T-cell (primary cell): ENCODE measurements at regions of chr14 and their contacts with region 1.

Region 1: DNA sequence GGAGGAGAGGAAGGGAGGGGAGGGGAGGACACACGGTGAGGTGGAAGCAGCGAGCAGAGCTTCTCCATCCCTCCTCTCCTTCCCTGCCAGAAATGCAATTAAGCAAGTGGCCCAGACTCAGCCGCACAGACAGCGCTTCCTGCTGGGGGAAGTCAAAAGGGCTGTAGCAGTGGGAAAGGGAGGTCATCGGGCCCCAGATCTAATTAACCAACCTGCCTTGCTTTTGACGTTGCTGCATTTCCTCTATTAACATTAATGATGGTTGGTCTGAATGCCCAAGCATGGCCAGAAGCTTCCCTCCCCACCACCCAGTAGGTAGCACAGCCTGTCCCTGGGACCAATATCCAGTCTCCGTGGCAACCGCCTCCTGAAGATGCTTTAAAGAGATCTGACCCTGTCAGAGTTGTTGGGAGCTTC is 4.6 kb upstream of the NGB start:
- DNase-seq: no peak
- ATAC-seq: no peak
- H3K4me3 ChIP-seq: no peak overlapping the region
- H3K4me3 Mint-ChIP-seq: no peak overlapping the region
- H3K27ac ChIP-seq: no peak overlapping the region
- H3K27ac Mint-ChIP-seq: no peak overlapping the region
- H3K4me1 ChIP-seq: no peaks in the 10 kb centered on the region
- H3K4me1 Mint-ChIP-seq: peaks cover 0 to 3% (median 0%) of the 10 kb centered on the region in 3 donors
- H3K27me3 ChIP-seq: peaks cover 0 to 20% of the 10 kb centered on the region in 2 experiments
- H3K27me3 Mint-ChIP-seq: peaks cover 18 to 20% of the 10 kb centered on the region in 2 donors

Region 2: DNA sequence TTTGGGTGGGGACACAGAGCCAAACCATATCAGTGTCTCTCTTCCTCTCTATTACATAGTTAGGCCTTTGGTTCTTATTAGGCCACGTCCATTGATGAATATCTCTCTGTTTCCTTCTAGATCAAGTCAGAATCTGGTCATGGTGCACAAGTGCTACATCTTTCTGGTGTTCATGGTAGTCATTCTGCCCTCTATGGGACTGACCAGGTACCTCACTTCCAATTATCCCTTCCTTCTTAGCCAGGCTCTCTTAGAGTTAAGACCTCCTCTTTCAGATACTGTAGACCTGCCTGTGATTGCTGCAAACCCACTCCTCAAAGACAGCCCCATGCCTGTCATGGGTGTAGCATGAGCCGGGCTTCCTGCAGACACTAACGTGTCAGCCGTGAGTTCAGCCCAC is 29.8 kb before region 1 on chr14:
- CTCF ChIA-PET with region 1: interaction called in 1 of 2 experiments, 17 read pairs
- POLR2A ChIA-PET with region 1: no interaction called
- DNase-seq: no peak
- ATAC-seq: no peak
- H3K4me3 ChIP-seq: no peak overlapping the region
- H3K4me3 Mint-ChIP-seq: no peak overlapping the region
- H3K27ac ChIP-seq: no peak overlapping the region
- H3K27ac Mint-ChIP-seq: no peak overlapping the region
- H3K4me1 ChIP-seq: no peaks in the 10 kb centered on the region
- H3K4me1 Mint-ChIP-seq: no peaks in the 10 kb centered on the region
- H3K27me3 ChIP-seq: peaks cover 0 to 14% of the 10 kb centered on the region in 2 experiments
- H3K27me3 Mint-ChIP-seq: peaks cover 0 to 5% of the 10 kb centered on the region in 2 donors

Region 3: GRCh38 chr14:77390188-77390587 is 114.6 kb after region 1 on chr14:
- CTCF ChIA-PET with region 1: no interaction called
- POLR2A ChIA-PET with region 1: interaction called in 1 of 2 experiments, 15 read pairs
- DNase-seq: no peak
- ATAC-seq: no peak
- H3K4me3 ChIP-seq: no peak overlapping the region
- H3K4me3 Mint-ChIP-seq: no peak overlapping the region
- H3K27ac ChIP-seq: no peak overlapping the region
- H3K27ac Mint-ChIP-seq: no peak overlapping the region
- H3K4me1 ChIP-seq: no peaks in the 10 kb centered on the region
- H3K4me1 Mint-ChIP-seq: no peaks in the 10 kb centered on the region
- H3K27me3 ChIP-seq: no peaks in the 10 kb centered on the region
- H3K27me3 Mint-ChIP-seq: no peaks in the 10 kb centered on the region